ENCODE measurements at regions of chr21 and their contacts with region 1.

Region 1: GRCh38 chr21:35051287-35051818 is 2.3 kb upstream of the RUNX1 start:
- DNase-seq: peak; percentile 61 to 85 (median 80)
- ATAC-seq: peak; percentile 74
- H3K4me3 ChIP-seq: no peak overlapping the region
- H3K4me3 Mint-ChIP-seq: peak overlapping the region; percentile 70 to 99 (median 94)
- H3K27ac ChIP-seq: peak overlapping the region; percentile 38
- H3K27ac Mint-ChIP-seq: peak overlapping the region; percentile 80 to 100 (median 98)
- H3K4me1 ChIP-seq: peaks cover 29 to 42% of the 10 kb centered on the region in 2 donors
- H3K4me1 Mint-ChIP-seq: peaks cover 37 to 61% (median 47%) of the 10 kb centered on the region in 7 donors
- H3K27me3 ChIP-seq: no peaks in the 10 kb centered on the region
- H3K27me3 Mint-ChIP-seq: peaks cover 0 to 5% (median 0%) of the 10 kb centered on the region in 5 donors

Region 2: GRCh38 chr21:34807146-34807880 is 244.0 kb before region 1 on chr21:
- CTCF ChIA-PET with region 1: no interaction called
- POLR2A ChIA-PET with region 1: no interaction called
- intact Hi-C with region 1: loop called in 1 of 2 experiments (anchors 2 kb)
- DNase-seq: peak in 2 of 9 donors; percentile 32 to 64
- ATAC-seq: peak; percentile 88
- H3K4me3 ChIP-seq: no peak overlapping the region
- H3K4me3 Mint-ChIP-seq: peak overlapping the region in 3 of 10 donors; percentile 18 to 52 (median 33)
- H3K27ac ChIP-seq: peak overlapping the region; percentile 36
- H3K27ac Mint-ChIP-seq: peak overlapping the region; percentile 28 to 91 (median 81)
- H3K4me1 ChIP-seq: peaks cover 25 to 49% of the 10 kb centered on the region in 2 donors
- H3K4me1 Mint-ChIP-seq: peaks cover 38 to 89% (median 82%) of the 10 kb centered on the region in 7 donors
- H3K27me3 ChIP-seq: no peaks in the 10 kb centered on the region
- H3K27me3 Mint-ChIP-seq: no peaks in the 10 kb centered on the region

Region 3: DNA sequence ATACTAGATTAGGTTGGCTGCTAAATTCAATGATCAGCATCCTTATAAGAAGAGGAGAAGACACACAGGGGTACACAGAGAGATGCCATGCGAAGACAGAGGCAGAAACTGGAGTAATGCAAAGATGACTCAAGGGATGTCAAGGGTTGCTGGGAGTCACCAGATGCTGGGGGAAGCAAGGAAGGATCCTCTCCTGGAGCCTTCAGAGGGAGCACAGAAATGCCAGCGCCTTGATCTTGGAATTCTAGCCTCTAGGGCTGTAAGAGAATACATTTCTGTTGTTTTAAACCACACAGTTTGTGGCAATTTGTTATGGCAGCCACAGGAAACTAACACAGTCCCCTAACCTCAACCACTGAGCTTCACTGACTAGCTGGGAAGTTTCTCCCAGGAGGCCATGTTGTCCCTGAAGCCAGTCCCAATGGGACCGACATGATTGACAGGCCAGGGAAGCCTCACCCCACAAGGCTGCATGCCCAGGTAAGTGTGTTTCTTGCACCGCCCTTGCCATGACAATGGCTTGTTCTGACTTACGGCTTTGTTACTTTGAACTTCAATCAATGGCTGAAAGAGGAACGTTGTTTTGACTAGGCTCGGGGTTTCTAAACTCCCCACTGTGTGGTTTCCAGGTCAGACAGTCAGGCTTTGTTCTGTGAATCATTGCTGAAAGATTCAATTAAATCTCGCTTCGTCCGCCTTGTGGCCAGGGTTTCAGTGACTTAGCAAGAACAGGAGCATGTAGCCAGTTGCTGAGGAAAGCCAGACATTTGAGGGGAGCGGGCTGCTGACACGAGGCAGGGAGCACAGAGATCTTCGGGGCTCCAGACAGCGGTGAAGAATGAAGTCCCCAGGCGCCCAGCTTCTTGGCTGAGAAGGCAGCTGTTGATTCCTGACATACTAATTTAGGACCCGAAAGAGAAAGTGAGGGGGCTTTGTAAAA is 64.5 kb before region 1 on chr21:
- CTCF ChIA-PET with region 1: interaction called, 8 read pairs
- POLR2A ChIA-PET with region 1: interaction called, 32 read pairs
- intact Hi-C with region 1: loop called (anchors 1 kb)
- DNase-seq: peak in 8 of 9 donors; percentile 52 to 74 (median 67)
- ATAC-seq: peak; percentile 83
- H3K4me3 ChIP-seq: peak overlapping the region; percentile 26
- H3K4me3 Mint-ChIP-seq: peak overlapping the region; percentile 70 to 91 (median 81)
- H3K27ac ChIP-seq: peak overlapping the region; percentile 61
- H3K27ac Mint-ChIP-seq: peak overlapping the region; percentile 82 to 98 (median 94)
- H3K4me1 ChIP-seq: peaks cover 82 to 86% of the 10 kb centered on the region in 2 donors
- H3K4me1 Mint-ChIP-seq: peaks cover 6 to 97% (median 87%) of the 10 kb centered on the region in 7 donors
- H3K27me3 ChIP-seq: no peaks in the 10 kb centered on the region
- H3K27me3 Mint-ChIP-seq: peaks cover 0 to 5% (median 0%) of the 10 kb centered on the region in 5 donors

Region 4: DNA sequence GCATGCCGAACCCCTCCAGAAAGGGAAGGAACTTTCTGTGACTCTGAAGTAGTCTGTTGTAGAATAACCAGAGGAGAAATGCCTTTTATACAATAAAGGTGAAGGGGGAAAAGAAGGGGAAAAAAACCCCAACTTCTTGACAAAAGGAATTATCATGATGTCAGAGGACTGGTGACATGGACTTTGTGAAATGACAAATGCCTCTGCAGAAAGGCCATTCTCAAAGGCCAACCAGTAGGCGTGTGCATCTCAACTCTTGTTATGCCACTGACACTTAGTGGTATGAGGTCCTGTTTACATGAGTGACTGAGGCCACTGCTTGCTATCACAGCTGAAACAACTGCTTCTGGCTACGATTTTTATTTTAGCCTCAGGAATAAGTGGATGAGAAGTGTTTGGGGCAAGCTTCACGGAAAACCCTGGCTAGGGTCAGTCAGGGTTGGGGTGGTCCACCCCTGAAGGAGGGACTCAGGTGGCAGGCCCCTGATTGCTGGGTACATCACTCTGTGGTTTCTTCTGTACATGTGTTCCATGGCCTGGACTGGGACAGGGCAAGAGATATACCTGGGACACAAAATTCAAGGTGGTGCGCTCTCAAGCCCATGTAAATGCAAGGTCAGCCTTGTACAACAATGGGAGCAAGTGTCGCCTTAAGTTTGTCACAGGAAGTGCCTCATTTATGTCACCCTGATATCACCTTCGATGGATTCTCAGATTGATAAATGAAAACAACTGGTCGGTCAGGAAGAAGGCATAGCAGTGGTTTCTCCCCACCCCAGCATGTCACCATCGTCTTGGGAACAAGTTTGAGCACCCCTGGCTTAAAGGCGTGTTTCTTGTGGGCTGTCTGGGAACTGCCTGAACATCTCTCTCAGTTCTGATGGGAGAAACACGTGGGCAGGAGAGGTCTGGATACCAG is 14.6 kb before region 1 on chr21:
- CTCF ChIA-PET with region 1: interaction called, 4 read pairs
- POLR2A ChIA-PET with region 1: interaction called, 19 read pairs
- intact Hi-C with region 1: no loop called
- DNase-seq: no peak
- ATAC-seq: peak; percentile 8
- H3K4me3 ChIP-seq: peak overlapping the region; percentile 39
- H3K4me3 Mint-ChIP-seq: peak overlapping the region; percentile 70 to 98 (median 78)
- H3K27ac ChIP-seq: peak overlapping the region; percentile 68
- H3K27ac Mint-ChIP-seq: peak overlapping the region; percentile 80 to 100 (median 95)
- H3K4me1 ChIP-seq: peaks cover 83 to 92% of the 10 kb centered on the region in 2 donors
- H3K4me1 Mint-ChIP-seq: peaks cover 76 to 100% (median 98%) of the 10 kb centered on the region in 7 donors
- H3K27me3 ChIP-seq: no peaks in the 10 kb centered on the region
- H3K27me3 Mint-ChIP-seq: no peaks in the 10 kb centered on the region

Region 5: GRCh38 chr21:35127851-35128250 is 76.5 kb after region 1 on chr21:
- CTCF ChIA-PET with region 1: no interaction called
- POLR2A ChIA-PET with region 1: no interaction called
- intact Hi-C with region 1: no loop called
- DNase-seq: no peak
- ATAC-seq: no peak
- H3K4me3 ChIP-seq: no peak overlapping the region
- H3K4me3 Mint-ChIP-seq: no peak overlapping the region
- H3K27ac ChIP-seq: no peak overlapping the region
- H3K27ac Mint-ChIP-seq: no peak overlapping the region
- H3K4me1 ChIP-seq: no peaks in the 10 kb centered on the region
- H3K4me1 Mint-ChIP-seq: no peaks in the 10 kb centered on the region
- H3K27me3 ChIP-seq: no peaks in the 10 kb centered on the region
- H3K27me3 Mint-ChIP-seq: no peaks in the 10 kb centered on the region

Region 6: DNA sequence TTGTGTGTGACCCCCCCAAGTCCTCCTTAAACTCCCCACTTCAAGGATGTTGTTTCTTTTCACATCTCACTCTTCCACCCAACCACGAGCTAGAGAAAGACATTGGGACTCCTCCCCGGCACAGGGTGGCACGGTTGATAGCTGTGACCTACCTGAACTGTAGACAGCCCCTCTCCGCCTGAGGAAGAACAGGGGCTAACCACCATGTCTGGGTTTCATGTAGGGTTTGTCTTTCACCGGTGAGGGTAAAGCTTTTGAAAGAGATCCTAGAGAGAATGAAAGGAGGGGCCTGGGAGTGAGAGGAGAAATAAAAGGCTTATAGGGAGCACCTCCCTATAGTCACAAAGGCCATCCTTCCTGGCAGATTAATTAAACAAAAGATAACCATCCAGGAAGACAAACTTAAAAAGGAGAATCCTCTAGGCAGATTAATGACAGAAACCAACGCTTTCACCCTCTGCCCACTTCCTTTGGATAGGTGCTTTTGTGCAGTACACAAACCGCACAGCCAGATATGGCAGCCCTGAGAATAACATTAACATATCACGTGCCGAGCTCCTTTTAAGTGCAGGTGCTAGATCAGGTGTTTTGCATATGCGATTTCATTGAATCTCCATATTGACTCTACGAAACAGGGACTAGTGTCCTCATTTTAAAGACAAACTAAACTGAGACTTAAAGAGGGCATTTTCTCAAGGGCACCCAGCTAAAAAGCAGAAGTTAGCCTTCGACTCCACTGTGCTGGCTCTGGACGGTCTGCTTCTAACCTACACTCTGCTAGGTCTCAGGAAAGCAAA is 175.8 kb after region 1 on chr21:
- CTCF ChIA-PET with region 1: interaction called, 3 read pairs
- POLR2A ChIA-PET with region 1: interaction called, 3 read pairs
- intact Hi-C with region 1: loop called (anchors 2 kb)
- DNase-seq: peak in 7 of 9 donors; percentile 46 to 74 (median 63)
- ATAC-seq: peak; percentile 87
- H3K4me3 ChIP-seq: peak overlapping the region; percentile 43
- H3K4me3 Mint-ChIP-seq: peak overlapping the region; percentile 51 to 80 (median 70)
- H3K27ac ChIP-seq: peak overlapping the region; percentile 20
- H3K27ac Mint-ChIP-seq: peak overlapping the region; percentile 48 to 90 (median 82)
- H3K4me1 ChIP-seq: peaks cover 26 to 30% of the 10 kb centered on the region in 2 donors
- H3K4me1 Mint-ChIP-seq: peaks cover 27 to 50% (median 43%) of the 10 kb centered on the region in 7 donors
- H3K27me3 ChIP-seq: no peaks in the 10 kb centered on the region
- H3K27me3 Mint-ChIP-seq: peaks cover 0 to 6% (median 0%) of the 10 kb centered on the region in 5 donors

Region 7: DNA sequence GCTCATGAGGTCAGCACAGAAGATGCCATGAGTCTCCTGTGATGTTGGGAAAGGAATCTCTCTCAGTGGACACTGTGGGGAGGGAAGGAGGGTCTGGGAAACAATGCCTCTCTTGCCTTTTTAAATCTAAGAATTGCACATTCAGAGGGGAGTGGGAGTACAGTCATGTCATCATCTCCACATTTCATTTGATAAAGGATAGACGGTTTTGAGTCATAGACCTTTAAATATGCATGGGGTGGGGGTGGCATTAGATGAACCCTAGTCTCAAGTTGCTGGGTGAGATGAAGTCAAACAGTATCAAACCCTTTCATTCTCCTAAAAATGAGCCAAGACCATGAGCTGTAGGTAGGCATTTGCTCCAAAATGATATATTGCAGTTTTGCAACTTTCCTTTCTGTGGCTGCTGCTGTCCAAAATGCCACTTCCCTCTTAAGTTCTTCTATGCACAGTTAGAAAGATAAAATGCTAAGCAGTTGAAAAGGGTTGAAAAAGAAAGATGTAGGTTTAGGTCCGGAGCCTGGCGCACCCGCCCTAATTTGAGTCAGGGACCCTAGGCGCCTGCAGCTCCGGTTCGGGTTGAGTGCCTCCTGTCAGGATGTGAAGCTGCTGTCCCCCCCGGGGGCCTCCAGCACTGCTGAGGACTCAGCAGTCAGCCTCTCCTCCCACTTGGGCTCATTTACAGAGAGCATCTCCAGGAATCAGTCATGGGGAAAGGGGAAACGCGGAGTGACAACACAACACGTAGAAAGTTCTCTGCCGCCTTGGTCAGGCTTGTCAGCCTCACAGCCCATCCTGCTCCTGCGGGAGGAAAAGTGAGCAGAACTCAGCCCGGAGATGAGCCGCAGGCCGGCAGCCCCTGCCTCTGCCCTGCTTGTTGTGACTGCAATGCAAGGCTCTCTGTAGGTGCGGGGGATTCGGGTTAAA is 477.0 kb after region 1 on chr21:
- CTCF ChIA-PET with region 1: no interaction called
- POLR2A ChIA-PET with region 1: no interaction called
- intact Hi-C with region 1: loop called in 1 of 2 experiments (anchors 5 kb)
- DNase-seq: peak; percentile 14 to 57 (median 42)
- ATAC-seq: peak; percentile 70
- H3K4me3 ChIP-seq: peak overlapping the region; percentile 91
- H3K4me3 Mint-ChIP-seq: peak overlapping the region; percentile 82 to 93 (median 90)
- H3K27ac ChIP-seq: peak overlapping the region; percentile 84
- H3K27ac Mint-ChIP-seq: peak overlapping the region; percentile 94 to 98 (median 96)
- H3K4me1 ChIP-seq: peaks cover 7 to 31% of the 10 kb centered on the region in 2 donors
- H3K4me1 Mint-ChIP-seq: peaks cover 34 to 61% (median 51%) of the 10 kb centered on the region in 7 donors
- H3K27me3 ChIP-seq: no peaks in the 10 kb centered on the region
- H3K27me3 Mint-ChIP-seq: no peaks in the 10 kb centered on the region

Region 8: GRCh38 chr21:36113647-36114428 is 1062.5 kb after region 1 on chr21:
- CTCF ChIA-PET with region 1: no interaction called
- POLR2A ChIA-PET with region 1: no interaction called
- intact Hi-C with region 1: loop called (anchors 2 to 5 kb)
- DNase-seq: peak in 8 of 9 donors; percentile 49 to 90 (median 74)
- ATAC-seq: peak; percentile 92
- H3K4me3 ChIP-seq: peak overlapping the region; percentile 64
- H3K4me3 Mint-ChIP-seq: peak overlapping the region; percentile 67 to 100 (median 88)
- H3K27ac ChIP-seq: peak overlapping the region; percentile 72
- H3K27ac Mint-ChIP-seq: peak overlapping the region; percentile 85 to 98 (median 92)
- H3K4me1 ChIP-seq: peaks cover 0 to 19% of the 10 kb centered on the region in 2 donors
- H3K4me1 Mint-ChIP-seq: peaks cover 16 to 45% (median 28%) of the 10 kb centered on the region in 7 donors
- H3K27me3 ChIP-seq: no peaks in the 10 kb centered on the region
- H3K27me3 Mint-ChIP-seq: peaks cover 0 to 10% (median 0%) of the 10 kb centered on the region in 5 donors

Measured in naive thymus-derived CD4-positive, alpha-beta T cell (primary cell).